ENCODE measurements at regions of chr5 and their contacts with region 1.

Region 1: GRCh38 chr5:142296914-142297417 is 27.9 kb downstream of the SPRY4 start:
- DNase-seq: peak; percentile 98
- H3K4me3 ChIP-seq: no peak overlapping the region
- H3K27ac ChIP-seq: peak overlapping the region; percentile 99
- H3K4me1 ChIP-seq: peaks cover 41% of the 10 kb centered on the region
- H3K27me3 ChIP-seq: no peaks in the 10 kb centered on the region
- CTCF ChIP-seq: no peak
- POLR2A ChIP-seq: no peak

Region 2: GRCh38 chr5:141681695-141682641 is 615.0 kb before region 1 on chr5 and contains the start of gene ARAP3:
- CTCF ChIA-PET with region 1: no interaction called
- POLR2A ChIA-PET with region 1: no interaction called
- dilution Hi-C with region 1: no loop called
- intact Hi-C with region 1: loop called (anchors 2 kb)
- DNase-seq: peak; percentile 92
- H3K4me3 ChIP-seq: peak within 1 kb of the TSS; percentile 5 to 69 (median 45)
- H3K27ac ChIP-seq: peak within 1 kb of the TSS; percentile 100
- H3K4me1 ChIP-seq: peaks cover 62% of the 10 kb centered on the region
- H3K27me3 ChIP-seq: no peaks in the 10 kb centered on the region
- CTCF ChIP-seq: no peak
- POLR2A ChIP-seq: peak; percentile 56
- total RNA-seq, gene ARAP3: 136 and 142 TPM in 2 replicates

Region 3: GRCh38 chr5:142095651-142096330 is 201.2 kb before region 1 on chr5:
- CTCF ChIA-PET with region 1: no interaction called
- POLR2A ChIA-PET with region 1: no interaction called
- dilution Hi-C with region 1: no loop called
- intact Hi-C with region 1: no loop called
- DNase-seq: no peak
- H3K4me3 ChIP-seq: no peak overlapping the region
- H3K27ac ChIP-seq: no peak overlapping the region
- H3K4me1 ChIP-seq: no peaks in the 10 kb centered on the region
- H3K27me3 ChIP-seq: peaks cover 4 to 6% of the 10 kb centered on the region in 2 experiments
- CTCF ChIP-seq: no peak
- POLR2A ChIP-seq: no peak

Region 4: GRCh38 chr5:142201471-142201887 is 95.5 kb before region 1 on chr5:
- CTCF ChIA-PET with region 1: interaction called, 5 read pairs
- POLR2A ChIA-PET with region 1: no interaction called
- dilution Hi-C with region 1: no loop called
- intact Hi-C with region 1: loop called (anchors 1 kb)
- DNase-seq: peak; percentile 85
- H3K4me3 ChIP-seq: no peak overlapping the region
- H3K27ac ChIP-seq: peak overlapping the region; percentile 91
- H3K4me1 ChIP-seq: peaks cover 40% of the 10 kb centered on the region
- H3K27me3 ChIP-seq: no peaks in the 10 kb centered on the region
- CTCF ChIP-seq: no peak
- POLR2A ChIP-seq: peak; percentile 58

Region 5: DNA sequence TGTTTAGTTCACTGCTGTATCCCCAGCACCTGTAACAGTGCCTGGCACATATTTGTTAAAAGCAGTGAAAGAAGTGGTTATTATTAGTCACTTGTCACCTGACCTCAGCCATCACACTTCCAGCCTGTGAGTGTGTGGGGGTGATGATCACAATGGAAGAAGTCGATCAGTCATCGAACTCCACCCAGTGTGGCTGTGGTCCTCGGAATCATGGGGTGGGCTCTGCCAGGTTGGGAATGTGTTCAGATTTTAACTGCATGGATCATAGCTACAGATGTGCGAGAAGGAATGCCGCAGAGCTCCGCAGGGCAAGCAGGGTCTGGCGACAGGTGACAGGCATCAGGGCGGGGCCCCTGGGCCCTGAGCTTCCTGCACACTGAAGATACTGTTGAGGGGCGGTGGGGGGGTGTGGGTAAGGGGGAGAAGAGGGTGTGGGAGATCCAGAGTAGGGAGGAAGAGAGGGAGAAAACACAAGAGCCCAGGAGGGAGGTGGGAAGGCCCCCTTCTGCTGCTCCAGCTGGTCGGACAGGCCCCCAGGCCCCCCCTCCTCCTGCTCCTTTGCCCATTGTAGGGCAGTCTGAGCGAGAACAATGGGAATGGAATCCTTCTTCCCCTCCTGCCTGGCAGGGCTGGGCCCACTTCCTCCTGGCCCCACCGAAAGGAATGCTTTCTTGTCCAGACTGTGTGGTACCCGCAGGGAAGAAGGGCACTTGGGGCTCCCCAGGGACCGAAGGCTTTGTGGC is 61.7 kb before region 1 on chr5:
- CTCF ChIA-PET with region 1: no interaction called
- POLR2A ChIA-PET with region 1: no interaction called
- dilution Hi-C with region 1: no loop called
- intact Hi-C with region 1: loop called (anchors 1 kb)
- DNase-seq: peak; percentile 65
- H3K4me3 ChIP-seq: no peak overlapping the region
- H3K27ac ChIP-seq: peak overlapping the region; percentile 19
- H3K4me1 ChIP-seq: peaks cover 15% of the 10 kb centered on the region
- H3K27me3 ChIP-seq: no peaks in the 10 kb centered on the region
- CTCF ChIP-seq: no peak
- POLR2A ChIP-seq: no peak

Region 6: DNA sequence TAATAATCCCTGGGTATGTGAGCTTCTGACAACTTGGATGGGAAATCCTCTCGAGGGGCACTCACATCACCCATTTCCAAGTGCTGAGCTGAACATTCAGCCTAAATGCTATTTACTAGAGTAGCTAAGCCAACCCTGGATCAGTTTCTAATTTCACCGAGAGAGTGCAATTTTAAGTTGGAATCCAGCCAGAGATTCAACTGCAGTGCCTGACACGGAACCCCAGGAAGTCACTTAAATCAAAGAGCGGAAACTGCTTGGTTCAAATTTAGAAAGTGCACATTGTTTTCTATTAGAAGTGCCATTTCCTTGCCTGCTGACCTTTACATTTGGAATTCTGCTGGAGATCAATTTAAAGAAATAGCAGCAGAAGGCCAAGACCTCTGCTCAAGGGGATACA is 19.1 kb after region 1 on chr5:
- CTCF ChIA-PET with region 1: interaction called, 7 read pairs
- POLR2A ChIA-PET with region 1: interaction called, 5 read pairs
- dilution Hi-C with region 1: no loop called
- intact Hi-C with region 1: loop called (anchors 1 kb)
- DNase-seq: peak; percentile 82
- H3K4me3 ChIP-seq: no peak overlapping the region
- H3K27ac ChIP-seq: peak overlapping the region; percentile 57
- H3K4me1 ChIP-seq: peaks cover 68% of the 10 kb centered on the region
- H3K27me3 ChIP-seq: no peaks in the 10 kb centered on the region
- CTCF ChIP-seq: no peak
- POLR2A ChIP-seq: no peak

Region 7: GRCh38 chr5:142356716-142357473 is 59.9 kb after region 1 on chr5:
- CTCF ChIA-PET with region 1: no interaction called
- POLR2A ChIA-PET with region 1: no interaction called
- dilution Hi-C with region 1: no loop called
- intact Hi-C with region 1: loop called (anchors 1 kb)
- DNase-seq: peak; percentile 94
- H3K4me3 ChIP-seq: peak overlapping the region in 1 of 3 experiments; percentile 54
- H3K27ac ChIP-seq: peak overlapping the region; percentile 74
- H3K4me1 ChIP-seq: peaks cover 31% of the 10 kb centered on the region
- H3K27me3 ChIP-seq: no peaks in the 10 kb centered on the region
- CTCF ChIP-seq: no peak
- POLR2A ChIP-seq: peak; percentile 47

Region 8: DNA sequence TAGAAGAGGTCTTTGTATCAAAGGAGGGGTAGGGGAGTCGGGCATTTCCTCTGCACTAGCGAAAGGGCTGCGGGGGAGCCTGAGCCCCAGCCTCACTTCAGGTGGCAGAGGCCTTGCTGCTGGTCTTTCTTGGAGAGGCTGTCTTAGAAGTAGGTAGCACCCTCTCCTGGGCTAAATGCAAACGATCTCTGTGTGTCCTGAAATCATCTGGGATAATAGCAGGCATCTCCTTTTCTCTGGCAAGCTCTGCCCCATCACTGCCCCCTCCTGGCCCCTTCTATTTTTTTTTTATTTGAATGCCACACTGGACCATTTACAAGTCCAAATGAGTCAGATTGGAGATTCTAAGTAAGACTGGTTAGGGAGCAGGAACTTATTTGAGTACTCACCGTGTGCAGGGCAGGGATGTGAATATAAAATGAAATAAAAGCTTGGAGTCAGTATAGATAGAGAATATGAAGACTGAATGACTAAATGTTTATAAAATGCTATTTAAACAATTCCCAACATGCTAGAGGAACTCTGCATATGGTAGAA is 251.8 kb after region 1 on chr5:
- CTCF ChIA-PET with region 1: interaction called, 9 read pairs
- POLR2A ChIA-PET with region 1: no interaction called
- dilution Hi-C with region 1: no loop called
- intact Hi-C with region 1: loop called (anchors 2 kb)
- DNase-seq: peak; percentile 97
- H3K4me3 ChIP-seq: no peak overlapping the region
- H3K27ac ChIP-seq: peak overlapping the region; percentile 43
- H3K4me1 ChIP-seq: peaks cover 34% of the 10 kb centered on the region
- H3K27me3 ChIP-seq: no peaks in the 10 kb centered on the region
- CTCF ChIP-seq: peak; percentile 87 to 93
- POLR2A ChIP-seq: no peak